Aorta (tissue), 5 donors: ENCODE measurements at regions of chr1 and their contacts with region 1.

Region 1: DNA sequence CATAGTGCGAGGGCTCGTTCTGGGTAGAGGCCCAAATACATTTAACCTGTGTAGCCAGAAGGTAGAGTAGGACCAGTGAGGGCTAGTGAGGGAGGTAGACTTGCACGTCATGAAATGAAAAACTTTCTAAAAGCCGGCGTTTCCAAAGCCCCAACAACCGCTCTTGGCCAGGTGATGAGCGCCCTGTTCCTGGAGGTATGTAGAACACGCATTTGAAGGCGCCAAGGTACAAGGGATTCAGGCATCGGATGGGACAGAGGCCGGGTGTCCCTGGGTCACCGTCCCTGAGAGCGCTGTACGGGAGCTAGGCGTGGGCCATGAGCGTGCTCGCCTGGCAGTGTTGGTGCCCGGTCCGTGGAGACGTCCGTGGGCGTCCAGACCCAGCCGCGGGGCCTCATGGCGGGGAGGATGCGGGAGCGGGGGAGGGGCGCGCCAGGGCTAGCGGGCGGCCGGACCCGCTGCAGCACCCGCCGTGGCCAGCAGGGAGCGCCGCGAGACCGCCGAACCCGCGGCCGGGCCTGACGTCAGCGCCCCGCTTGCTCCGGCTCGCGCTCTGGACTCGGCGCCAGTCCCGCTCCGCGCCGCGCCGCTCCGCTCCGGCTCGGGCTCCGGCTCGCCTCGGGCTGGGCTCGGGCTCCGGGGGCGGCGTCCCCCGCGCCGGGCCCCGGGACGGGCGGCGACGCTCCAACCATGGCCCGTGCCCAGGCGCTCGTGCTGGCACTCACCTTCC is at the start of gene PTPRU:
- DNase-seq: peak; percentile 83 to 95
- ATAC-seq: peak; percentile 92
- H3K4me3 ChIP-seq: peak within 1 kb of the TSS; percentile 78 to 88
- H3K27ac ChIP-seq: peak within 1 kb of the TSS in 1 of 2 donors; percentile 15
- H3K4me1 ChIP-seq: no peaks in the 10 kb centered on the region
- H3K27me3 ChIP-seq: no peaks in the 10 kb centered on the region
- total RNA-seq, gene PTPRU: 16.0 to 35.3 TPM

Region 2: DNA sequence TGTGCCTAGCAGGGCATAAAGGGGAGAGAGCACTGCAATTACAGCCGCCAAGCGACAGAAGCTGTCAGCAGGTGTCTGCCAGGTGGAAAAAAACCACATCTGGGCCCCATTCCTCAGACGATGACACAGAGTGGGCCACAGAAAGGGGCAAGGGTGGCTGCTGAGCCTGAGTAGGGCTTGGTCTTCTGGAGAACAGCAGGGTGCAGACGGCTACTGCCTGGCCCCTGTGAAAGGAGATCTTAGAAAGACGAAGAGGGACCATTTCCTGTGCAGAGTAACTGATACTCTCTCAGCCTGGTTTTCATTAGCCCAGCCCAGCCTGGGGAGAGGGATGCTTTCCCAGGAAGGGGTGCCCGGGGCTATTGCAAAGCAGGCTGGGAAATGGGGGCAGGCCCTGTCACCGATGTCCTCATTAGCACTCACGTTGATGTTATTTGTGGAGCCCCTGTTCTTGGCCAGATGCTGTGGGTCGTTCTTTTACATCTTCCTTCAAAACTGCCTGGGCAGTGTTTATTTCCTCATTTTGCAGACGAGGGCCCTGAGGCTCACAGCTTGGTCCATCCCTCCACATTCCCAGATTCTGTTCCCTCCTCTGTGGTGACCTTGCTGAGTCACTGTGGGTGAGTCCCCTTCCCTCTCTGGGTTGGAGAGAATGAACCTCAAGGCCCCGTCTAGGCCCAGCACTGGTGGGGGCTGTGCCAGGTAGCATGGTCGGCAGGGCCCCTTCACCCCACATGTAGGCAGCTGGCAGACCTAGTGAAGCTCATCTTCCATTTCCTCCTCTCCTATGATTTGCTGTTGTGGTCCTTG is 473.0 kb after region 1 on chr1:
- intact Hi-C with region 1: loop called (anchors 2 to 10 kb)
- DNase-seq: no peak
- ATAC-seq: peak; percentile 37
- H3K4me3 ChIP-seq: no peak overlapping the region
- H3K27ac ChIP-seq: peak overlapping the region; percentile 71 to 95
- H3K4me1 ChIP-seq: no peaks in the 10 kb centered on the region
- H3K27me3 ChIP-seq: no peaks in the 10 kb centered on the region

Region 3: GRCh38 chr1:29849038-29849750 is 613.1 kb after region 1 on chr1:
- intact Hi-C with region 1: loop called (anchors 5 to 10 kb)
- DNase-seq: no peak
- ATAC-seq: no peak
- H3K4me3 ChIP-seq: no peak overlapping the region
- H3K27ac ChIP-seq: no peak overlapping the region
- H3K4me1 ChIP-seq: no peaks in the 10 kb centered on the region
- H3K27me3 ChIP-seq: no peaks in the 10 kb centered on the region

Region 4: GRCh38 chr1:30085811-30086770 is 850.0 kb after region 1 on chr1:
- intact Hi-C with region 1: loop called (anchors 2 to 5 kb)
- DNase-seq: peak; percentile 82 to 92
- ATAC-seq: peak; percentile 80
- H3K4me3 ChIP-seq: peak overlapping the region in 1 of 2 donors; percentile 22
- H3K27ac ChIP-seq: peak overlapping the region in 1 of 2 donors; percentile 95
- H3K4me1 ChIP-seq: peaks cover 0 to 6% of the 10 kb centered on the region in 2 donors
- H3K27me3 ChIP-seq: no peaks in the 10 kb centered on the region

Region 5: GRCh38 chr1:30111431-30111830 is 875.3 kb after region 1 on chr1:
- intact Hi-C with region 1: loop called (anchors 5 kb)
- DNase-seq: peak in 1 of 2 donors; percentile 71
- ATAC-seq: peak; percentile 81
- H3K4me3 ChIP-seq: no peak overlapping the region
- H3K27ac ChIP-seq: no peak overlapping the region
- H3K4me1 ChIP-seq: no peaks in the 10 kb centered on the region
- H3K27me3 ChIP-seq: no peaks in the 10 kb centered on the region

Region 6: DNA sequence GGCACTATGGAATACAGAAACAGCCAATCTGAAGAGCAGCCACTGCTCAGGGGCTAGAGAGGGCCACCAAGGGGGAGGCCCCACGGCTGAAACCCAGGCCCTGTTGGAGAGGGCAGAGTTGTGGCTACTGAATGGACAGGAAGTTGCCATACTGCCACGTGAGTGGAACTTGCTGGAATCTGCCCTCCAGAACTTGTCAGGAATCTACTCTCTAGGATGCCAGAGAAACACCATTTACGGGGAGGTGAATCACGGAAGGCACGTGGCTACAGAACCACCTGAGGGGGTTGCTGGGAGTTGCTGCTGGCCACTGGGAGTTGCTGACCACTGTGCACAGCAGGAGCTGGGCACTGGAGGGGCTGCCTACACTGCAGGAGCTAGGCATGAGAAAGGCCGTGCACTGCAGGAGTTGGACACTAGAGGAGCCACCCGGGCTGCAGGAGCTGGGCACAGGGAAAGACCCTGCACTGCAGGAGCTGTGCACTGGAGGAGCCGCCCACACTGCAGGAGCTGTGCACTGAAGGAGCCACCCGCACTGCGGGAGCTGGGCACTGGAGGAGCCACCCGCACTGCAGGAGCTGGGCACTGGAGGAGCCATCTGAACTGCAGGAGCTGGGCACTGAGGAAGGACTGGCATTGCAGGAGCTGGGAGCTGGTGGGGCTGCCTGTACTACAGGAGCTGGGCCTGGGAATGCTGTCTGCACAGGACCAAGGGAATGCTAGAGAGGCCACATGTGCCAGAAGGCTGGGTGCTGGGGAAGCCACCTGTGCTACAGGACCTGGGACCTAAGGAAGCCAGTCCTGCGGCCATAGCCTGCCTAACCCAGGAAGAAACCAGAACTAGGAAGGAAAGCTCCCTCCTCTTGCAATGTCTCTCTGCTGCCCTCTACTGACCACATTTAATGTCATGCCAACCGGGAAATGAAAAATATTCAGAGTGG is 1143.8 kb after region 1 on chr1:
- intact Hi-C with region 1: loop called (anchors 2 to 5 kb)
- DNase-seq: no peak
- ATAC-seq: peak; percentile 85
- H3K4me3 ChIP-seq: no peak overlapping the region
- H3K27ac ChIP-seq: no peak overlapping the region
- H3K4me1 ChIP-seq: no peaks in the 10 kb centered on the region
- H3K27me3 ChIP-seq: no peaks in the 10 kb centered on the region

Region 7: GRCh38 chr1:30718636-30719405 is 1482.7 kb after region 1 on chr1:
- intact Hi-C with region 1: loop called in 1 of 2 experiments (anchors 5 kb)
- DNase-seq: peak; percentile 95 to 99
- ATAC-seq: peak; percentile 93
- H3K4me3 ChIP-seq: peak overlapping the region in 1 of 2 donors; percentile 4
- H3K27ac ChIP-seq: peak overlapping the region; percentile 62 to 89
- H3K4me1 ChIP-seq: no peaks in the 10 kb centered on the region
- H3K27me3 ChIP-seq: no peaks in the 10 kb centered on the region